ENCODE measurements at regions of chr1 and their contacts with region 1.

Region 1: GRCh38 chr1:202009326-202010179 is 834 bp upstream of the ELF3 start:
- DNase-seq: peak; percentile 89
- ATAC-seq: peak; percentile 44
- H3K4me3 ChIP-seq: peak overlapping the region; percentile 95
- H3K27ac ChIP-seq: peak overlapping the region; percentile 97
- H3K4me1 ChIP-seq: peaks cover 70% of the 10 kb centered on the region
- H3K27me3 ChIP-seq: no peaks in the 10 kb centered on the region
- CTCF ChIP-seq: peak; percentile 85

Region 2: GRCh38 chr1:201955009-201955728 is 54.4 kb before region 1 on chr1 and contains the start of gene TIMM17A:
- CTCF ChIA-PET with region 1: no interaction called
- POLR2A ChIA-PET with region 1: no interaction called
- intact Hi-C with region 1: no loop called
- DNase-seq: peak; percentile 92
- ATAC-seq: peak; percentile 100
- H3K4me3 ChIP-seq: peak within 1 kb of the TSS; percentile 98
- H3K27ac ChIP-seq: peak within 1 kb of the TSS; percentile 64
- H3K4me1 ChIP-seq: peaks cover 5% of the 10 kb centered on the region; the same call in 1 of the 2 replicates
- H3K27me3 ChIP-seq: no peaks in the 10 kb centered on the region
- CTCF ChIP-seq: no peak
- total RNA-seq, gene TIMM17A: 50.9 and 57.7 TPM in 2 replicates

Region 3: GRCh38 chr1:202029171-202029665 is 19.7 kb after region 1 on chr1:
- CTCF ChIA-PET with region 1: interaction called, 3 read pairs
- POLR2A ChIA-PET with region 1: interaction called, 20 read pairs
- intact Hi-C with region 1: loop called (anchors 2 kb)
- DNase-seq: peak; percentile 88
- ATAC-seq: peak; percentile 92
- H3K4me3 ChIP-seq: no peak overlapping the region
- H3K27ac ChIP-seq: peak overlapping the region; percentile 95
- H3K4me1 ChIP-seq: peaks cover 28% of the 10 kb centered on the region
- H3K27me3 ChIP-seq: no peaks in the 10 kb centered on the region
- CTCF ChIP-seq: no peak

Region 4: DNA sequence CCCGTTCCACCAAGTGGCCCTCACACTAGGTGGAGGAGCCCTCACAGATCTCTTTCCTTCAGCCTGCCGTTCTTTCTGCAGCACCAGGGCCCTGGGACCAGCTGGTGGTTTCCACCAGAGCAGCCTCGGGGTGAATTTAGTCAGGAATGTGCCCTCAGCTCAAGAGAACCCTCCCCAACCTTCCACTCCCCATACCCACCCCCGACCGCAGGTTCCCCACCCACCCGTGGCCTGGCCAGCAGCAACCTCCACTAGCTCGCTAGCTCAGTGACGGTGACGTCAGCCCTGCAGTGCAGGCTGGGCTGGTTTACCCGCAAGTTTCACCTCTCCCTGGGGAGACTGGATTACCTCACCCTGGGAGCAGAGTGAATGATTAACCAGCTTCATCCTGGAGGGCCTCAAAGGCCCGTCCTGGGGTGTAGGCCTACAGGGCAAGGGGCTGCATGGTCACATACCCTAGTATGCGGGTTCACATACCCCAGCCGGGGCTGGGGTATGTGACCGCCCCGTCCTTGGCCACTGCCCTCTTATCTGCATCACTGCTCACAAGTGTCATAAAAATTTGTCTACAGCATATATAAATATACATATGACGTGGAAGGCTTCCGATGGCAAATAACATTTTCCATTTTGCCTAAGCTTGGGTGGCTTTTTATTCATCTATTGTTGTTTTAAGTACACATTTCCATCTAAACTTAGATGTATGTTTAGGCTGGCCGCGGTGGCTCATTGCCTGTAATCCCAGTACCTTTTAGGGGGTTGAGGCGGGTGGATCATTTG is 25.3 kb after region 1 on chr1:
- CTCF ChIA-PET with region 1: interaction called, 3 read pairs
- POLR2A ChIA-PET with region 1: interaction called, 20 read pairs
- intact Hi-C with region 1: loop called (anchors 2 kb)
- DNase-seq: peak; percentile 95
- ATAC-seq: peak; percentile 93
- H3K4me3 ChIP-seq: peak overlapping the region; percentile 28; the same call in 1 of the 2 replicates
- H3K27ac ChIP-seq: peak overlapping the region; percentile 99
- H3K4me1 ChIP-seq: peaks cover 33% of the 10 kb centered on the region
- H3K27me3 ChIP-seq: no peaks in the 10 kb centered on the region
- CTCF ChIP-seq: no peak

Region 5: DNA sequence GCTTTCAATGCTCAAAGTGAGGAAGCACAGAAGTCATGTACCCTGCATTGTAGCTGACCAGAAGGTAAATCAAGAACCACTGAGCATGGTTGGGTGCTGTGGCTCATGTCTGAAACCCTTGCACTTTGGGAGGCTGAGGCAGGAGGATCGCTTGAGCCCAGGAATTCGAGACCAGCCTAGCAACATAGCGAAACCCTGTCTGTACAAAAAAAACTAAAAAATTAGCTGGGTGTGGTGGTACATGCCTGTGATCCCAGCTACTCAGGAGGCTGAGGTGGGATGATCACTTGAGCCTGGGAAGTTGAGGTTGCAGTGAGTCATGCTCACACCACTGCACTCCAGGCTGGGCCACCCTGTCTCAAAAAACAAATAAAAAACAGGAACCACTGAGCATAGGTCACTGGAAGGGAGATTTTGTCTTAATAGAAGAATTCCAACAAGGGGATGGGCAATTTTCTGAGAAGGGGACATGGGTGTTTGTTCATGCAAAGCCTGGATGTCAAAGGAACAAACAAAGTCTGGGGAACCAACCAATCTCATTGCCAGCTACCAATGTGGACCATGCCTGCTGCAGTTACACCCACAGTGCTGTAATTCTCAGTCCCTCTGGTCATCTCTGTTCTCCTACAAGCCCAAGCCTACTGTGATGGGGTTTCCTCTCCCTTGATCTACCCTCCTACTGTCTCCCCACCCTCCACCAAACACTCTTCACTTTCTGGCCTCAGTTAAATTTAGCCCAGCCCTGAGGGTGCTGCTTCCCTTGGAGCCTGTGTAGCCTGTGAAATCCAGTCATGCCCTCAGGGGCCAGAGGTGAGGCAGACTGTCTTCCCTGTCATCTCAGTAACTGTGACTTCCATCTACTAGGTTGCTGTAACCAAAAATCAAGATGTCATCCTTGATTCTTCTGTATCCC is 48.7 kb after region 1 on chr1:
- CTCF ChIA-PET with region 1: interaction called, 4 read pairs
- POLR2A ChIA-PET with region 1: interaction called, 10 read pairs
- intact Hi-C with region 1: no loop called
- DNase-seq: peak; percentile 81
- ATAC-seq: peak; percentile 77
- H3K4me3 ChIP-seq: no peak overlapping the region; the same call in 1 of the 2 replicates
- H3K27ac ChIP-seq: peak overlapping the region; percentile 98
- H3K4me1 ChIP-seq: peaks cover 31% of the 10 kb centered on the region
- H3K27me3 ChIP-seq: no peaks in the 10 kb centered on the region
- CTCF ChIP-seq: no peak

Region 6: GRCh38 chr1:202090997-202091396 is 81.4 kb after region 1 on chr1:
- CTCF ChIA-PET with region 1: no interaction called
- POLR2A ChIA-PET with region 1: interaction called, 5 read pairs
- intact Hi-C with region 1: loop called (anchors 1 kb)
- DNase-seq: peak; percentile 24
- ATAC-seq: peak; percentile 43
- H3K4me3 ChIP-seq: no peak overlapping the region
- H3K27ac ChIP-seq: no peak overlapping the region
- H3K4me1 ChIP-seq: peaks cover 14% of the 10 kb centered on the region; the same call in 1 of the 2 replicates
- H3K27me3 ChIP-seq: no peaks in the 10 kb centered on the region
- CTCF ChIP-seq: peak; percentile 38; the same call in 1 of the 2 replicates

Region 7: GRCh38 chr1:202107295-202107761 is 97.8 kb after region 1 on chr1:
- CTCF ChIA-PET with region 1: no interaction called
- POLR2A ChIA-PET with region 1: no interaction called
- intact Hi-C with region 1: no loop called
- DNase-seq: peak; percentile 44
- ATAC-seq: peak; percentile 52
- H3K4me3 ChIP-seq: no peak overlapping the region
- H3K27ac ChIP-seq: peak overlapping the region; percentile 81
- H3K4me1 ChIP-seq: peaks cover 31% of the 10 kb centered on the region
- H3K27me3 ChIP-seq: no peaks in the 10 kb centered on the region
- CTCF ChIP-seq: no peak

Region 8: GRCh38 chr1:202122639-202123335 is 113.2 kb after region 1 on chr1 and contains the start of gene GPR37L1:
- CTCF ChIA-PET with region 1: interaction called, 5 read pairs
- POLR2A ChIA-PET with region 1: interaction called, 9 read pairs
- intact Hi-C with region 1: loop called (anchors 1 kb)
- DNase-seq: peak; percentile 32
- ATAC-seq: peak; percentile 71
- H3K4me3 ChIP-seq: no peak within 1 kb of the TSS
- H3K27ac ChIP-seq: no peak within 1 kb of the TSS
- H3K4me1 ChIP-seq: peaks cover 5% of the 10 kb centered on the region
- H3K27me3 ChIP-seq: no peaks in the 10 kb centered on the region
- CTCF ChIP-seq: peak; percentile 40; the same call in 1 of the 2 replicates
- total RNA-seq, gene GPR37L1: 0.04 TPM in 1 of 2 replicates, not detected in the other